CD8-positive, alpha-beta memory T cell (primary cell): ENCODE measurements at regions of chr19 and their contacts with region 1.

Region 1: DNA sequence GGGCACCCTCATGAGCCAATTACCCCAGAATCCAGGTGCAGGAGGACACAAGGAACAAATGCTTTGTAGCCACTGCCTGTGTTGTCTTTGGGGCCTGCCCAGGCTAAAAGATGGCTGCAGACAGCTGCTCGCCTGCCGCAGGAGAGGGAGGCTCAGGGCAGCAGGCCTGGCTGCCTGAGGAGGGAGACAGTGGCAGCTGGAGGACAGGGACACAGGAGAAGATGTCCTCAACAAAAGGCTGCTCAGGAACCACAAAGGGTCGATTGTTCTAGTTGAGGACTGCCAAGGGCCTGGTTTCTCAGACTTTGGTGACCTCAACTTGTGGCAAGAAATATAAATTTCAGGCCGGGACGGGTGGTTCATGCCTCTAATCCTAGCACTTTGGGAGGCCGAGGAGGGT is 7.6 kb downstream of the SIRT2 start:
- DNase-seq: no peak
- H3K4me3 ChIP-seq: no peak overlapping the region
- H3K4me3 Mint-ChIP-seq: no peak overlapping the region
- H3K27ac ChIP-seq: no peak overlapping the region
- H3K27ac Mint-ChIP-seq: no peak overlapping the region
- H3K4me1 ChIP-seq: peaks cover 6% of the 10 kb centered on the region
- H3K4me1 Mint-ChIP-seq: peaks cover 0 to 9% (median 6%) of the 10 kb centered on the region in 3 donors
- H3K27me3 ChIP-seq: no peaks in the 10 kb centered on the region
- H3K27me3 Mint-ChIP-seq: no peaks in the 10 kb centered on the region

Region 2: GRCh38 chr19:38877781-38878574 is 13.8 kb before region 1 on chr19 and contains the start of gene RINL:
- CTCF ChIA-PET with region 1: interaction called, 30 read pairs
- POLR2A ChIA-PET with region 1: no interaction called
- DNase-seq: peak; percentile 48 to 82 (median 66)
- H3K4me3 ChIP-seq: peak within 1 kb of the TSS; percentile 83
- H3K4me3 Mint-ChIP-seq: peak within 1 kb of the TSS; percentile 75 to 94 (median 90)
- H3K27ac ChIP-seq: peak within 1 kb of the TSS; percentile 92
- H3K27ac Mint-ChIP-seq: peak within 1 kb of the TSS; percentile 95 to 99 (median 96)
- H3K4me1 ChIP-seq: peaks cover 41% of the 10 kb centered on the region
- H3K4me1 Mint-ChIP-seq: peaks cover 24 to 46% (median 37%) of the 10 kb centered on the region in 3 donors
- H3K27me3 ChIP-seq: no peaks in the 10 kb centered on the region
- H3K27me3 Mint-ChIP-seq: no peaks in the 10 kb centered on the region
- total RNA-seq, gene RINL: 82.3 to 85.4 TPM